Naive thymus-derived CD4-positive, alpha-beta T cell (primary cell): ENCODE measurements at regions of chr3 and their contacts with region 1.

Region 1: DNA sequence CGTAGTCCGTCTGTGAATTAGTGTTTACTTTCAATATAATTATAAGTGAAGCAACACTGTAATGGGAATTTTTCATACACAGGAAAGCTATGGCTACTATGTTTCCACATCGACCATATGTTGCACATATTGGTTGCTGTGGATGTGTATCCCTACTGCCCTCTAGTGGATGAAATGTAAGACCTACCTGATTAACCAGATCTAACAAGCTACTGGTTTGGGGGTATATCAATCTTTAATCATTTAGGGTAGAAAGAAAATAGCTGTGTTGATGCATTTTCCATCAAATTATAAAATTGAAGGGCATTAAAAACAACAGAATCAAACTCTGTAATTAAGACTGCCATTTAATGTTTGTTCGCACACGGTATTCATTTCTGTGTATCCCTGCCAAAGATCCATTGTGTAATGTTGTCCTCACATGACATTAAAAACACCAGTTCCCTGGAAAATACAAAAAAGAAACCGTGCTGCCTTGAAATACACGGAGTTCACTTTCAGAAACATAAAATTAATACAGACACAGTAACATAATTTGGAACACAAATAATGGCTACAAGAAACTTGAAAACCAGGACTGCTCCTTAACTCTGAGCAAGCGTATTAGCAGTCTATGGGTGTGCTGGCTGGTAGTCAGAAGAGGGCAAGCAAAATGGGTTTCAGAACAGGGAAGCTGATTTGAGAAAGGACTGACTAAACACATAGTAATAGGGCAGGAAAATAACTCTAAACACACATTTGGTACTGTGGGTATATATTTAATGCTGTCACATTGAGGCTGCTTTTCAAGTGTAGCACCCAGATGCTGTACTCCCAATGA is 125.1 kb downstream of the TIGIT start:
- DNase-seq: peak in 7 of 9 donors; percentile 40 to 66 (median 57)
- ATAC-seq: peak; percentile 91
- H3K4me3 ChIP-seq: no peak overlapping the region
- H3K4me3 Mint-ChIP-seq: no peak overlapping the region
- H3K27ac ChIP-seq: no peak overlapping the region
- H3K27ac Mint-ChIP-seq: peak overlapping the region in 2 of 9 donors; percentile 26 to 60
- H3K4me1 ChIP-seq: no peaks in the 10 kb centered on the region
- H3K4me1 Mint-ChIP-seq: peaks cover 4 to 18% (median 8%) of the 10 kb centered on the region in 7 donors
- H3K27me3 ChIP-seq: no peaks in the 10 kb centered on the region
- H3K27me3 Mint-ChIP-seq: peaks cover 0 to 2% (median 0%) of the 10 kb centered on the region in 5 donors

Region 2: DNA sequence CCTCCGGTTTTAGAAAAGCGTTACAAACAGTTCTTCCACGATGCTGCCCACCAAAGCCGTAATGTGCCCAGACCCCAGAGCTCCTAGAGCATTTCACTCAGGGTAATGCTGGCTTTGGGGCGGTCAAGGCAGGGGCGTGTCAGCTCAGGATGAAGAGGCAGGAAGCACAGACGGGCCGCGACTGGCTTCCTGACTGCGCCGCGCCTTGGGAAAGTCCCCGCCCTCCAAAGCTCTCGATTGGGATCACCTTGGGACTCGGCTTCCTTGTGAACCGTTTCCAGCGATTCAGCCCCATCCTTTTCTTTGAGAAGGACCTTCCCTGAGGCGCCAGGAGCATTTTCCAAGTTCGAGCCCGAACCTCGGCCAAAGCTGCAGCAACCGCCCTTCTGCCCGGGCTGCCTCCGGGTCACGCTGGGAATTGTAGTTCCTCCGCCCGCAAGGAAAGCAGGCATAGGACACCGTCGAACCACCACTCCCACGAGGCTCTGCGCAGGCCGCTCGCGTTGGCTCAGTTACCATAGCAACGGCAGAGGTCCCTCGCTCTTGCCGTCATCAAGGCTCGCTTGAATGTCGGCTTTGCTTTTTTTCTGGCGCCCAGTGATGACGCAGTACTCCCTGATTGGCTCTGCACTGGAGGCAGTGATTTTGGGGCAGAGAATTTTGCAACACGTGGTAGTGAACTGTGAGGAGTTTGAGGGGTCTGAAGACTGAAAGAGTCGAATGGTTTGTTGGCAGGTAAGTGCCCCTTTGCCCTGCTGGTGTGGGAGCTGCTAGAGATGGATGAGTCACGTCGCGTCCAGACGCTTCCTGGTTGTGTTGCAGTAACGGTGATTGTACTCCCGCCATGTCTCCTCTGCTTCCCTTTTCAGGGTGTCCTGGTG is 362.6 kb before region 1 on chr3 and contains the starts of genes CCDC191 and QTRT2:
- CTCF ChIA-PET with region 1: no interaction called
- POLR2A ChIA-PET with region 1: no interaction called
- intact Hi-C with region 1: loop called in 1 of 2 experiments (anchors 2 kb)
- DNase-seq: peak; percentile 82 to 99 (median 98)
- ATAC-seq: peak; percentile 97
- H3K4me3 ChIP-seq: peak within 1 kb of the TSS; percentile 95
- H3K4me3 Mint-ChIP-seq: peak within 1 kb of the TSS; percentile 91 to 100 (median 98)
- H3K27ac ChIP-seq: peak within 1 kb of the TSS; percentile 91
- H3K27ac Mint-ChIP-seq: peak within 1 kb of the TSS; percentile 87 to 99 (median 97)
- H3K4me1 ChIP-seq: peaks cover 10 to 12% of the 10 kb centered on the region in 2 donors
- H3K4me1 Mint-ChIP-seq: peaks cover 24 to 60% (median 55%) of the 10 kb centered on the region in 7 donors
- H3K27me3 ChIP-seq: no peaks in the 10 kb centered on the region
- H3K27me3 Mint-ChIP-seq: peaks cover 0 to 2% (median 0%) of the 10 kb centered on the region in 5 donors
- total RNA-seq, gene CCDC191: 3.9 to 8.8 (median 5.1) TPM
- total RNA-seq, gene QTRT2: 29.9 to 38.8 (median 33.8) TPM

Region 3: GRCh38 chr3:114290911-114291901 is 127.7 kb before region 1 on chr3:
- CTCF ChIA-PET with region 1: interaction called, 3 read pairs
- POLR2A ChIA-PET with region 1: no interaction called
- intact Hi-C with region 1: loop called (anchors 1 kb)
- DNase-seq: peak; percentile 61 to 85 (median 77)
- ATAC-seq: peak; percentile 88
- H3K4me3 ChIP-seq: peak overlapping the region; percentile 37
- H3K4me3 Mint-ChIP-seq: peak overlapping the region in 6 of 10 donors; percentile 7 to 66 (median 52)
- H3K27ac ChIP-seq: peak overlapping the region; percentile 51
- H3K27ac Mint-ChIP-seq: peak overlapping the region in 7 of 9 donors; percentile 27 to 80 (median 59)
- H3K4me1 ChIP-seq: peaks cover 4 to 42% of the 10 kb centered on the region in 2 donors
- H3K4me1 Mint-ChIP-seq: peaks cover 0 to 18% (median 5%) of the 10 kb centered on the region in 7 donors
- H3K27me3 ChIP-seq: no peaks in the 10 kb centered on the region
- H3K27me3 Mint-ChIP-seq: no peaks in the 10 kb centered on the region

Region 4: DNA sequence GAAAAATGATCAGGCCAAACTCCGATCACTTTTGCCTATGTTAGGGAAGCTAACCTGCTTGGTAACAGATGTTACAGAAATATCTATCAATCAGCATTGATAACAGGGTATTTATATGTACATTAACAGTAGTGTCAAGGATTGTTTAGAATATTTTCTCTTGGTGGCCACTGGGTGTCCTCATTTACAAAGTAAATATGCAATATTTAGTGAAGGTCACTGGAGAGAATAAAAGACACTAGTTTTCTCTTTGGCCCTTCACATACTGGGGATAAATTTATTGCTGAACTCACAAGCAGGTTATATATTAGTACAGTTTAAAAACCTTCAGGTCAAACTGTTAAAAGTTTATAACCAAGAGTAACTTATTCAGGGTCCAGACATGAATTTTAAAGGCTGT is 56.1 kb before region 1 on chr3:
- CTCF ChIA-PET with region 1: no interaction called
- POLR2A ChIA-PET with region 1: no interaction called
- intact Hi-C with region 1: loop called in 1 of 2 experiments (anchors 1 kb)
- DNase-seq: no peak
- ATAC-seq: no peak
- H3K4me3 ChIP-seq: no peak overlapping the region
- H3K4me3 Mint-ChIP-seq: no peak overlapping the region
- H3K27ac ChIP-seq: no peak overlapping the region
- H3K27ac Mint-ChIP-seq: no peak overlapping the region
- H3K4me1 ChIP-seq: no peaks in the 10 kb centered on the region
- H3K4me1 Mint-ChIP-seq: no peaks in the 10 kb centered on the region
- H3K27me3 ChIP-seq: no peaks in the 10 kb centered on the region
- H3K27me3 Mint-ChIP-seq: no peaks in the 10 kb centered on the region

Region 5: GRCh38 chr3:114383875-114384557 is 34.9 kb before region 1 on chr3:
- CTCF ChIA-PET with region 1: interaction called, 12 read pairs
- POLR2A ChIA-PET with region 1: no interaction called
- intact Hi-C with region 1: loop called (anchors 1 kb)
- DNase-seq: peak; percentile 7 to 58 (median 37)
- ATAC-seq: peak; percentile 96
- H3K4me3 ChIP-seq: peak overlapping the region; percentile 57
- H3K4me3 Mint-ChIP-seq: peak overlapping the region in 8 of 10 donors; percentile 60 to 88 (median 77)
- H3K27ac ChIP-seq: no peak overlapping the region
- H3K27ac Mint-ChIP-seq: peak overlapping the region in 5 of 9 donors; percentile 27 to 73 (median 56)
- H3K4me1 ChIP-seq: peaks cover 0 to 7% of the 10 kb centered on the region in 2 donors
- H3K4me1 Mint-ChIP-seq: peaks cover 0 to 23% (median 12%) of the 10 kb centered on the region in 7 donors
- H3K27me3 ChIP-seq: no peaks in the 10 kb centered on the region
- H3K27me3 Mint-ChIP-seq: no peaks in the 10 kb centered on the region